Activated B cell treated with CpG ODN at 0.5 μM for 24 hours (primary cell): ENCODE measurements at regions of chr10 and their contacts with region 1.

Region 1: DNA sequence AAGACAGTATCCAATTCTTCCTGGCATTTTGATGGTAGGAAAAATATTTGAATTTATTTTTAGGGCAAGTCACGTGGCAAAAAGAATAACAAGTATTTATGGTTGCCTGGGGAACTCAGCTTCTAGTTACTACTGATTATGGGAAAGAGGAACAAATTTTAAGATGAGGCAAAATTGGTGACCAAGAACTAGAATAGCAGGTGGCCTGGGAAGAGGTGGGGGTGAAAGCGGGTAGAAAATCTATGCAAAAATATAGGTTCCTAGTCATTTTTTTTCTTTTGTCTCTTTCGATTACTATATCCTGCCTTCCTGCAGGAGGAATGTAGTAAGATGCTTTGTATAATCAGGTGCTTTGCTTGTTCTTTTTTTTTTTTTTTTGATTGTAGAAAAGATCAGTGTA is 27.8 kb downstream of the ENTPD1 start:
- DNase-seq: no peak
- ATAC-seq: peak; percentile 55
- H3K4me3 Mint-ChIP-seq: peak overlapping the region; percentile 53
- H3K27ac Mint-ChIP-seq: peak overlapping the region; percentile 99
- H3K4me1 Mint-ChIP-seq: peaks cover 95% of the 10 kb centered on the region
- H3K27me3 Mint-ChIP-seq: no peaks in the 10 kb centered on the region
- CTCF ChIP-seq: no peak

Region 2: GRCh38 chr10:95767884-95768556 is 15.7 kb before region 1 on chr10:
- CTCF ChIA-PET with region 1: interaction called, 6 read pairs
- POLR2A ChIA-PET with region 1: interaction called, 6 read pairs
- intact Hi-C with region 1: loop called (anchors 1 kb)
- DNase-seq: peak; percentile 32
- ATAC-seq: peak; percentile 89
- H3K4me3 Mint-ChIP-seq: peak overlapping the region; percentile 74
- H3K27ac Mint-ChIP-seq: peak overlapping the region; percentile 97
- H3K4me1 Mint-ChIP-seq: peaks cover 77% of the 10 kb centered on the region
- H3K27me3 Mint-ChIP-seq: no peaks in the 10 kb centered on the region
- CTCF ChIP-seq: no peak

Region 3: GRCh38 chr10:95814011-95814727 is 30.4 kb after region 1 on chr10:
- CTCF ChIA-PET with region 1: interaction called, 3 read pairs
- POLR2A ChIA-PET with region 1: interaction called, 37 read pairs
- intact Hi-C with region 1: no loop called
- DNase-seq: no peak
- ATAC-seq: no peak
- H3K4me3 Mint-ChIP-seq: peak overlapping the region; percentile 37
- H3K27ac Mint-ChIP-seq: peak overlapping the region; percentile 67
- H3K4me1 Mint-ChIP-seq: peaks cover 79% of the 10 kb centered on the region
- H3K27me3 Mint-ChIP-seq: no peaks in the 10 kb centered on the region
- CTCF ChIP-seq: no peak

Region 4: GRCh38 chr10:95820363-95820762 is 36.6 kb after region 1 on chr10:
- CTCF ChIA-PET with region 1: interaction called, 4 read pairs
- POLR2A ChIA-PET with region 1: interaction called, 298 read pairs
- intact Hi-C with region 1: loop called (anchors 1 kb)
- DNase-seq: no peak
- ATAC-seq: peak; percentile 78
- H3K4me3 Mint-ChIP-seq: peak overlapping the region; percentile 72
- H3K27ac Mint-ChIP-seq: peak overlapping the region; percentile 93
- H3K4me1 Mint-ChIP-seq: peaks cover 80% of the 10 kb centered on the region
- H3K27me3 Mint-ChIP-seq: no peaks in the 10 kb centered on the region
- CTCF ChIP-seq: no peak